Heart left ventricle (tissue), 16 donors: ENCODE measurements at regions of chr10 and their contacts with region 1.

Region 1: GRCh38 chr10:87872828-87873227 is 9.4 kb downstream of the PTEN start:
- DNase-seq: no peak
- ATAC-seq: no peak
- H3K4me3 ChIP-seq: no peak overlapping the region
- H3K27ac ChIP-seq: no peak overlapping the region
- H3K4me1 ChIP-seq: peaks cover 4 to 96% (median 77%) of the 10 kb centered on the region in 12 donors
- H3K27me3 ChIP-seq: no peaks in the 10 kb centered on the region
- CTCF ChIP-seq: no peak
- POLR2A ChIP-seq: no peak

Region 2: DNA sequence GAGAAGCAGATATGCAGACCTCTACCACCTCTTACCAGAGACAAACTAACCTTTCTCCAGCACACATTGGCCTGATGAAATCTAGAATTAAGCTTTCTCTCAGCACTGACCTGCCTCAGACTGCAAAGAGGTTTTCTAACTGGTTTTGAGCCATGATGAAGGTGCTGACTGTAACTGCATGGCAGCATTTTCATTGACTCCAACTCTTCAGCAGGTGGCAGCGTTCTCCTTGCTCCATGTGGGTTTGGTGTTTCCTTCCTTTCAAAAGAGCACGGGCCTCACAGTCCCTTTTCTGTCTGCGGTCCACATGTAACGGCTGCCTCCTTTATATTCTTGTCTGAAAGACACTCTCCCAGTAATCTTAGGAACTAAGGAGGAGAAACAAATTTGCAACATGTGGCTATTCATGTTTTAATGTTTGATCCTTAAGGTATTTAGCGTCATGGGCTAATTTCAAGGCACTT is 22.1 kb before region 1 on chr10:
- intact Hi-C with region 1: no loop called
- DNase-seq: peak in 4 of 5 donors; percentile 55 to 77 (median 62)
- ATAC-seq: peak in 3 of 4 donors; percentile 93 to 96 (median 94)
- H3K4me3 ChIP-seq: no peak overlapping the region
- H3K27ac ChIP-seq: no peak overlapping the region
- H3K4me1 ChIP-seq: peaks cover 0 to 9% (median 0%) of the 10 kb centered on the region in 12 donors
- H3K27me3 ChIP-seq: no peaks in the 10 kb centered on the region
- CTCF ChIP-seq: peak; percentile 46 to 81 (median 72)
- POLR2A ChIP-seq: no peak

Region 3: DNA sequence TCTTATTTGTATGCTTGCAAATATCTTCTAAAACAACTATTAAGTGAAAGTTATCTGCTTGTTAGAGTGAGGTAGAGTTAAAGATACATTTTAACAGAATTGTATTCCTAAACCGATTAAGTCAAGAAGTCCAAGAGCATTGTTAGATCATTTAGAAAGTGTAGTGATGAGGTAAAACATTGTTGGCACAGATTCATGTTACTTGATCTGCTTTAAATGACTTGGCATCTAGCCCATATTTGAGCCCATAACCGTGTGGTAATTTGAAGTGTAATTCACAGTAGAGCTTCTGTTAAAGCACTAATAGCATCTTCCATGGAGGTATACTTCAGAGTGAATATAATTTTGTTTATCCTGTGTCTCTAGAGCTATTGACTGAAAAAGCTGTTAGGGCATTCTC is 52.7 kb after region 1 on chr10:
- intact Hi-C with region 1: loop called in 3 of 10 experiments (anchors 5 to 10 kb)
- DNase-seq: no peak
- ATAC-seq: peak in 2 of 4 donors; percentile 26 to 47
- H3K4me3 ChIP-seq: no peak overlapping the region
- H3K27ac ChIP-seq: no peak overlapping the region
- H3K4me1 ChIP-seq: peaks cover 0 to 92% (median 53%) of the 10 kb centered on the region in 12 donors
- H3K27me3 ChIP-seq: no peaks in the 10 kb centered on the region
- CTCF ChIP-seq: no peak
- POLR2A ChIP-seq: no peak

Region 4: GRCh38 chr10:87952612-87953011 is 79.8 kb after region 1 on chr10:
- intact Hi-C with region 1: loop called in 3 of 10 experiments (anchors 5 to 10 kb)
- DNase-seq: no peak
- ATAC-seq: no peak
- H3K4me3 ChIP-seq: no peak overlapping the region
- H3K27ac ChIP-seq: no peak overlapping the region
- H3K4me1 ChIP-seq: peaks cover 0 to 20% (median 0%) of the 10 kb centered on the region in 12 donors
- H3K27me3 ChIP-seq: no peaks in the 10 kb centered on the region
- CTCF ChIP-seq: no peak
- POLR2A ChIP-seq: no peak